MCF 10A (cell line): ENCODE measurements at regions of chr22 and their contacts with region 1.

Region 1: DNA sequence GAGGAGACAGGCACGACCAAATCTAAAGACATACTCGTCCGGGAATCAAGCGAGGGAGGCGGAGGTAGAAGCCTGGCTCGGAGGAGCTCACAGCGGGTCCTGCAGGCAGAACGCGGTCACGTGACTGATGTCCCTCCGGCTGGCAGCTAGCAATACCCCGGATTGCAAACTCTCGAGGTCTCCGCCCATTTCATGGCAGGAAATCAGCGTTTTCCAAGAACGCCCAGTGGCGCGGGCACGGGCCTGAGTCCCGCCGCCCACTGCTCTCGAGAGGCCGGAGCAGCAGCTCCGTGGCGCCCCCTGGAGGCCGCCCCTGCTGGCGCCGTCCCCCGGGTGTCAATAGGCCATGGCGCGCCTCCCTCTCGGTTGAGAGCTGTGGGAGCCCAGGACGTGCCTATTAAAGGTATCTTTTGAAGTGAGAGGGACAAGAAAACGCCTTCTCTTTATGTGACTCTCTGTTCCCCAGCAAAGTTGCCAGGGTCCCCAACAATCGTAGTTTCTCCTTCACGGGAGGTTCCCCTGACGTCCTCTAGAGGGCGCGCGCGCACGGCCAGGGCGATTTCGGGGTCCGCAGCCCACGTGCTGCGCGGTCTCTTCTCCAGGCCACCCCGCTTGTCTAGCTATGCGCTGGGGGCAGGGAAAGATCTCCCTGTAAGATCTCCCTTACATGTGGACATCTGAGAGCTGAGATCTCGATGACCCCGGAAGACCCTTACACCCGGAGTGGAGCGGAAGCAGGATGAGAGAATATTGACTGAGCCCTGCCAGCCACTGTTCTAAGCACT is 37.3 kb upstream of the RBFOX2 start:
- DNase-seq: peak; percentile 91
- H3K4me3 Mint-ChIP-seq: peak overlapping the region; percentile 75
- H3K27ac Mint-ChIP-seq: peak overlapping the region; percentile 82
- H3K4me1 Mint-ChIP-seq: no peaks in the 10 kb centered on the region
- H3K27me3 Mint-ChIP-seq: no peaks in the 10 kb centered on the region
- CTCF ChIP-seq: peak; percentile 99

Region 2: GRCh38 chr22:35914665-35915476 is 151.1 kb before region 1 on chr22:
- CTCF ChIA-PET with region 1: interaction called, 10 read pairs
- POLR2A ChIA-PET with region 1: interaction called, 3 read pairs
- intact Hi-C with region 1: no loop called
- DNase-seq: peak; percentile 95
- H3K4me3 Mint-ChIP-seq: peak overlapping the region; percentile 75
- H3K27ac Mint-ChIP-seq: peak overlapping the region; percentile 91
- H3K4me1 Mint-ChIP-seq: peaks cover 53% of the 10 kb centered on the region
- H3K27me3 Mint-ChIP-seq: no peaks in the 10 kb centered on the region
- CTCF ChIP-seq: no peak

Region 3: DNA sequence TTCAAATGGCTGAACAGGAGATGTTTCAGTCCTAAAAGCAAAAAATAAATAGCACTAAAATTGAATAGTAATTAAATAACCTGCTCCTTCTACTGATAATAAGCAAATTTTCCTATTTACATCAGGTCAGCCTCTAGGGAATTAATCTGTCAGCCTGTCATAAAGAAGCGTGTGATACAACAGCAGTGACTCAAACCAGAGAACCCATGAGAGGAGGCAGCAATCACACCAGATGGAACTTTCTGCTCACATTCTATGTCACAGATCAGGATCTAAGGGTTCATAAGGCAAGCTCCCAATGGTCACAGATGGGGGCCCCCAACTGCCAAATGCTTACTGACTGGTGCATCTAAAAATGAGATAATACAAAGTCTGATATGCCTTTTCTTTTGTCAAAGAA is 78.5 kb before region 1 on chr22:
- CTCF ChIA-PET with region 1: interaction called, 13 read pairs
- POLR2A ChIA-PET with region 1: no interaction called
- intact Hi-C with region 1: no loop called
- DNase-seq: no peak
- H3K4me3 Mint-ChIP-seq: no peak overlapping the region
- H3K27ac Mint-ChIP-seq: no peak overlapping the region
- H3K4me1 Mint-ChIP-seq: no peaks in the 10 kb centered on the region
- H3K27me3 Mint-ChIP-seq: no peaks in the 10 kb centered on the region
- CTCF ChIP-seq: no peak

Region 4: DNA sequence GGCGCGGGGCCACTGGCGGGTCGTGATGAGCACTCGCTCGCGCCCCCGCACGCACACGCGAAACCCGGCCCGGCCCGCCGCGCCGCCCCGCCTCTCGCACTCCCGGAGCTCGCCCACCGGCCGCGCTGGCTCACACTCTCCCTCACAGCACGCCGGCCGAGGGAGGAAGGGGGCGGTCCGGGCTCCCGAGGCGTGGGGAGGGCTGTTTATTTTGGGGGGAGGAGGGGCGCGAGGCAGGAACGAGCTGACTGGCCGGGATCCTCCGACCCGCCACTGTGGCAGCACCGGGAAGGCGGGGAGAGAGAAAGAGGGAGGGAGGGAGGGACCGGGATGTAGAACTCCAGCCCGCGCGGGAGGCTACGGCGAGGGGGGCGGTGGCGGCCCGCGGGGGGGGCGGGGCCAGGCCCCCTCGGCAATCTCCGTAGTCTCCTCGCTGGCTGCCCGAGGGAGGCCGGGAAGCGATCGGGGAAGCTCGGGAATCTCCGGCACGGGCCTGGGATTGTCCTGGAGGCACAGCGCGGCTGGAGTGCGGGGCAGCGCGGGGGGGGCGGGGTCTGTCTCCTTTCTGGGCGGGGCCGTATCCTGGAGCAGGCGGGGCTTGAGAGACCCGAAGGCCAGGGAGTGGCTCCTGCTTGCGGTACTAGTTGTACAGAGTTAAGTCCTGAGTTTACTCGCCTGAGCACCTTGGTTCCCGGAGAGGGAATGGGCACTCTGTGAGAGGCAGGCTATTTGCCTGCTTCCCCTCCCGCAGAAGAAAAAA is 37.1 kb before region 1 on chr22 and contains the start of gene RBFOX2:
- CTCF ChIA-PET with region 1: interaction called, 28 read pairs
- POLR2A ChIA-PET with region 1: interaction called, 21 read pairs
- intact Hi-C with region 1: loop called (anchors 5 kb)
- DNase-seq: peak; percentile 96
- H3K4me3 Mint-ChIP-seq: peak within 1 kb of the TSS; percentile 83
- H3K27ac Mint-ChIP-seq: peak within 1 kb of the TSS; percentile 84
- H3K4me1 Mint-ChIP-seq: peaks cover 29% of the 10 kb centered on the region
- H3K27me3 Mint-ChIP-seq: no peaks in the 10 kb centered on the region
- CTCF ChIP-seq: no peak
- total RNA-seq, gene RBFOX2: 89.4 and 92.0 TPM in 2 replicates

Region 5: DNA sequence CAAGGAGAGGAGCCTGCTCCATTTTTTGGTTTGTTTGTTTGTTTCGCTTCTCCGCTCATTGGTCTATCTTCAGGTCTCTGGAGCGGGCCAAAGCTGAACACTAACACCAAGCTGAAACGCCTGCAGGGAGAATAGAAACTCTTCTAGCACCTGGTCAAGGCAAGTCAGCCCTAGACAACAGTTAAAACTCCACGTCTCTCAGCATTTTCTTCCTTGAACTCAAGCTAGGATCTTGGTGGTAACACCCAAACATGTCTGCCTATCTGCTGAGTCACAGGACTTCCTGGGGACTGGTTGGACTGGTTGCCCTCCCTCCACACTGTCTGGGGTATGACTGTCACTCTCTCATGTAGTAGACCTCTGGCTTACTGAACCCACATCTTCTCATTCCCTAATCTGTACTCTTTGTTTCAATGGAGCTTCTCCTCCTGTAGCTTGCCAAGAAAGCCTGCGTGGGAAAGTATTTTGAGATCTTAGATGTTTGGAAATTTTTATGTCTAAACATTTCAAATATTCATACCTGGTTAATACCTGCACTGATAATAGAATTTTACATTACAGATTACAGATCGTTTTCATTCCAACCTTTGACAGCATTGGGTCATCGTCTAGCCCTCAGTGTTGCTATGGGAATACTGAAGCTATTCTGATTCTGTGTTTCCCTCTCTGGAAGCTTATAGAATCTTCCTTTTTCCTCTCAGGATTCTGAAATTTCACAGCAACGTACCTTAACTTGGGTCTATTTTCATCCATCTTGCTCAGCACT is 13.3 kb before region 1 on chr22:
- CTCF ChIA-PET with region 1: interaction called, 55 read pairs
- POLR2A ChIA-PET with region 1: no interaction called
- intact Hi-C with region 1: no loop called
- DNase-seq: peak; percentile 21
- H3K4me3 Mint-ChIP-seq: no peak overlapping the region
- H3K27ac Mint-ChIP-seq: no peak overlapping the region
- H3K4me1 Mint-ChIP-seq: peaks cover 15% of the 10 kb centered on the region
- H3K27me3 Mint-ChIP-seq: no peaks in the 10 kb centered on the region
- CTCF ChIP-seq: no peak

Region 6: DNA sequence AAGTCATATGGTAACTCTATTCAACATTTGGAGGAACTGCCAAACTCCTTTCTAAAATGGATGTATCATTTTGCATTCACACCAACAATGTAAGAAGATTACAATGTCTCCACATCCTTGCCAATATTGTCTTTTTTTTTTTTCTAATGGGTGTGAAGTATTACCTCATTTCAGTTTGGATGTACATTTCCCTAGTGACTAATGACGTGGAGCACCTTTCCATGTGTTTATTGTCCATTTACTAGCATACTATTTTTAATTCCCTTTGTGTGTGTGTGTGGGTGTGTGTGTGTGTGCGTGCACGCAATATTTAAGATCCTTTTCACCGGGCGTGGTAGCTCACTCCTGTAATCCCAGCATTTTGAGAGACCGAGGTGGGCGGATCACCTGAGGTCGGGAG is 31.9 kb after region 1 on chr22:
- CTCF ChIA-PET with region 1: interaction called, 13 read pairs
- POLR2A ChIA-PET with region 1: no interaction called
- intact Hi-C with region 1: no loop called
- DNase-seq: peak; percentile 37
- H3K4me3 Mint-ChIP-seq: no peak overlapping the region
- H3K27ac Mint-ChIP-seq: no peak overlapping the region
- H3K4me1 Mint-ChIP-seq: peaks cover 6% of the 10 kb centered on the region
- H3K27me3 Mint-ChIP-seq: no peaks in the 10 kb centered on the region
- CTCF ChIP-seq: no peak

Region 7: DNA sequence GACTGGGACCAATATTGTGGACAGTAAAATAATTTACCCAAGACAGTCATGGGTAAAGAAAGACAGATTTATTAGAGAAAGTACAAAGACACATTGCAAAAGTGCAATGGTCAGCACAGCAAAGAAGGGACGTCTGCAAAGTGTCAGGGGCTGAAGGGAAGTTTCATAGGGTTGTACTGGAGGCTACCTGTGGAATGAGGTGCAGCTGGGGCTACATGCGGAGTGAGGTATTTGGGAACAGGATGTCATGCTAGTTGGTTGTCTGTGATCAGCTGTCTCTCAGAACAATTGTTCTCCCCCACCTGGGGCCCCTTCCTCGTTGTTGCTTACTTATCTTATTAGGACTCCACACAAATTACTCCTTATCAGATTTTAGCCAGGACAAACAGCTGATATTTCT is 106.0 kb after region 1 on chr22:
- CTCF ChIA-PET with region 1: no interaction called
- POLR2A ChIA-PET with region 1: no interaction called
- intact Hi-C with region 1: no loop called
- DNase-seq: no peak
- H3K4me3 Mint-ChIP-seq: no peak overlapping the region
- H3K27ac Mint-ChIP-seq: no peak overlapping the region
- H3K4me1 Mint-ChIP-seq: no peaks in the 10 kb centered on the region
- H3K27me3 Mint-ChIP-seq: peaks cover 3% of the 10 kb centered on the region
- CTCF ChIP-seq: no peak